ENCODE measurements at regions of chr14 and their contacts with region 1.

Region 1: GRCh38 chr14:100645192-100645990 is 58.2 kb upstream of the BEGAIN start:
- DNase-seq: peak; percentile 82 to 93
- ATAC-seq: peak; percentile 80 to 91
- H3K4me3 ChIP-seq: no peak overlapping the region
- H3K27ac ChIP-seq: peak overlapping the region; percentile 65 to 82
- H3K4me1 ChIP-seq: peaks cover 24% of the 10 kb centered on the region
- CTCF ChIP-seq: peak; percentile 76
- EP300 ChIP-seq: no peak
- POLR2A ChIP-seq: no peak
- RAD21 ChIP-seq: peak; percentile 86 to 95

Region 2: GRCh38 chr14:100393906-100394732 is 251.3 kb before region 1 on chr14:
- CTCF ChIA-PET with region 1: interaction called, 602 read pairs
- POLR2A ChIA-PET with region 1: no interaction called
- DNase-seq: no peak
- ATAC-seq: no peak
- H3K4me3 ChIP-seq: no peak overlapping the region
- H3K27ac ChIP-seq: peak overlapping the region in 1 of 2 experiments; percentile 43; a peak in 2 of 6 replicates
- H3K4me1 ChIP-seq: peaks cover 42% of the 10 kb centered on the region
- CTCF ChIP-seq: no peak
- EP300 ChIP-seq: no peak
- POLR2A ChIP-seq: no peak
- RAD21 ChIP-seq: no peak

Region 3: DNA sequence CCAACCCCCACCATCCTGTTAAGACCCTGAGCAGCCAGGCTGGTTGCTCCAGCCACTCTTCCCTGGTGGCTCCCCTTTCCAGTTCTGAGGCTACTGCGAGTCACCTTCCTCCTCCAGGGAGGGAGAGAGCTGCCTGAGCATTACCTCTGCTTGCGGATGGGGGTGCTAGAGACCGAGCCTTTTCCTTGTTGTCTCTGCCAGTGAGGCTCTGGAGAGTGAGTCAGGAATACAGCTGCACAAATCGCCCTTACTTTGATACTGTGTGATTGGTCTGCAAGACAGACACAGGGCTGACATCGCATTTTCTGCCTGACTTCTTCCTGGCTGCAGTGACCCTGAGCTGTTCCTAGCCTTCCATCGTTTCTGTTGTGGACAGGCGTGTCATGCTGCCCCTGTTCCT is 227.9 kb before region 1 on chr14:
- CTCF ChIA-PET with region 1: interaction called, 292 read pairs
- POLR2A ChIA-PET with region 1: interaction called, 4 read pairs
- DNase-seq: peak; percentile 88 to 94
- ATAC-seq: peak; percentile 97 to 98
- H3K4me3 ChIP-seq: no peak overlapping the region
- H3K27ac ChIP-seq: peak overlapping the region; percentile 73 to 90
- H3K4me1 ChIP-seq: peaks cover 26% of the 10 kb centered on the region
- CTCF ChIP-seq: peak; percentile 77
- EP300 ChIP-seq: no peak
- POLR2A ChIP-seq: no peak
- RAD21 ChIP-seq: peak; percentile 84 to 93

Region 4: GRCh38 chr14:100547633-100548294 is 97.6 kb before region 1 on chr14:
- CTCF ChIA-PET with region 1: interaction called, 11 read pairs
- POLR2A ChIA-PET with region 1: no interaction called
- DNase-seq: no peak
- ATAC-seq: peak in 1 of 2 experiments; percentile 34; a peak in 3 of 6 replicates
- H3K4me3 ChIP-seq: no peak overlapping the region
- H3K27ac ChIP-seq: no peak overlapping the region
- H3K4me1 ChIP-seq: peaks cover 5% of the 10 kb centered on the region; the same call in 1 of the 3 replicates
- CTCF ChIP-seq: no peak
- EP300 ChIP-seq: no peak
- POLR2A ChIP-seq: no peak
- RAD21 ChIP-seq: no peak

Region 5: GRCh38 chr14:100628225-100628624 is 17.2 kb before region 1 on chr14:
- CTCF ChIA-PET with region 1: interaction called, 14 read pairs
- POLR2A ChIA-PET with region 1: no interaction called
- DNase-seq: no peak
- ATAC-seq: no peak
- H3K4me3 ChIP-seq: no peak overlapping the region
- H3K27ac ChIP-seq: no peak overlapping the region
- H3K4me1 ChIP-seq: no peaks in the 10 kb centered on the region
- CTCF ChIP-seq: no peak
- EP300 ChIP-seq: no peak
- POLR2A ChIP-seq: no peak
- RAD21 ChIP-seq: no peak

Measured in A549 (cell line).